ENCODE measurements at regions of chr12 and their contacts with region 1.

Region 1: DNA sequence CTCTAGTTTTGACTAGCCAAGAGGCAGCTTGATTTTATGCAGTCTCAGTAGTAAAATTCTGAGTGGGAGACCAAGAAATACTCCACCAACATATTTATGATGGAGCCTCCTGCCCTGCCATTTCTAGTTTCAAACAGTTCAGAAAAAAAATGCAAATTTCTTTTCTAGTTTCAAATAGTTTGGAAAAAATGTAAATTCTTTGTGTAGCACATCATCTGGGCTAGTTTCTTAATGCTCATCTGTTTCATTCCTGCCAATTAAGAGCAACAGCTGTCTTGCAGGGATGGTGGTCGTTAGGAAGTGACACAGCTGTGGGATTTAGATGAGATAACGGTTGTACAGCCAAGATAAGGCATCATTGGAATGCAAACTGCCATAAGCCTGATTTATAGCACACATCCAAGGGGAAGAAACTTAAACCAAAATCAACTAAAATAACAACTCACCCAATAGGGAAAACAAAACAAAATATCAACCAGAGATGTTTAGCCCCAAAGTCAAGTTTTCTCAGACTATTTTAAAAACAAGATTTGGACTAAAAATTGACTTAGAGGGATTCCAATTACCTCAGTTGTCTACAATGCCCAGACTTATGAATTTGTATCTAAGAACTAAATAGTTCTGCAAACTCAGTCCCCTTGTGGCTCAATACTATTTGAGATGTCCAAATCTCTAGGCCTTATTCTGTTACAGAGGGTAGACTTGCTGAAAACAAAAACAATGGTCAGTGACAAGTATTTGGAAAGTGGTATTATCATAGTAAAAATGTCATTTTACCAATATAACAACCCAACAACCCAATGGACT is 291.3 kb upstream of the ATP2B1 start:
- DNase-seq: no peak
- ATAC-seq: no peak
- H3K4me3 ChIP-seq: no peak overlapping the region
- H3K27ac ChIP-seq: no peak overlapping the region
- H3K4me1 ChIP-seq: no peaks in the 10 kb centered on the region
- H3K27me3 ChIP-seq: no peaks in the 10 kb centered on the region
- CTCF ChIP-seq: no peak

Region 2: DNA sequence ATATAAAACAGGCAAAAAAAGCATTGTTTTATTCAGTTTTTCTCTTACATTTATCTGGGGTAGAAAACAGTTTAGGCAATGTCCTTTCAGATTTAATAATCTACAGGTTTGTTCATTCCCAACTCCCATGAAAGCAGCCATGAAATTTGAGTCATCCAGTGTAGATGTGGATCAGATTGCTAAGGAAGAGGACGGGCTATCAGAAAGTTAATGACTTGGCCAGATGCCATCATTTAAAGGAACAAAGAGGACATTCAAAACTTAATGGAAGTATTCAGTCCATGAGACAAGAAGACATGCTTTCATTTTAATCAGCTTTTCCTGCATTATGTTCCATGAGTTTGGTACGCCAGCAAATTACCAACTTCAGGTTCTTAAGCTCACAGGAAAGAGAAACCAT is 442.9 kb before region 1 on chr12:
- CTCF ChIA-PET with region 1: no interaction called
- POLR2A ChIA-PET with region 1: no interaction called
- in situ Hi-C with region 1: no loop called
- intact Hi-C with region 1: no loop called
- DNase-seq: no peak
- ATAC-seq: no peak
- H3K4me3 ChIP-seq: no peak overlapping the region
- H3K27ac ChIP-seq: no peak overlapping the region
- H3K4me1 ChIP-seq: no peaks in the 10 kb centered on the region
- H3K27me3 ChIP-seq: no peaks in the 10 kb centered on the region
- CTCF ChIP-seq: no peak

Region 3: DNA sequence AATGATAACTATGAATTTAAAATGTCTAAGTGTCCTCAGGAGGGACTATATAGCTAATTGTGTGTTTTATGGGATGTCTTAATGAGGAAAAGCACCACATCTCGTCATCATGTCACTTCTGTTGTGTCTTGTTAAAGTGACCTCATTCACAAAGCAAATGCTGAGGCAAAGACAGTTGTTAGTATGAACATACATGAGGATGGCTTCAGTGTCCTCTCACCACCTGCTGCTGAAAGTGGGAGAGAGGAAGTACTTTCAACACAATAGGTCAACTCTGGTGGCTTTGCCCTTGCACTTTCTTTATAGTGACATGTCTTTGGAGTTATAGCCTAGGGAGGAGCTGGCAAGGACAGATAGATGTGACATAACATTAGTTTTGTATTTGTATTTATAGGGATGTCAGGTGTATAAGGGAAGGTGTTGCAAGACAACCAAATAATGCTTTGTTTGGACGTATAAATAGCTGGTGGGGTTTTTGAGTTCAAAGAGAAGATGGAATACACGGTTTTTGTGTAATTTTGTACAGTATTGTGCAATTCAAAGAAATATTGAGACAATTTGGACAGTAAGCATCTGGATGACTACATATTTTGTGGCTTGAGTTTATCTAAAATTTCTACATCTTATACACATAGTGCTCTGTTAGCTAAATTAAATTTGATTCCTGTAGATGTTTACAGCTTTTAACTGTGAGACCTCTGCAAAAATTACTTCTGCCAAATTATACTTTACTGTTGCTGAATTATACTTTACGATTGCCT is 159.6 kb before region 1 on chr12:
- CTCF ChIA-PET with region 1: no interaction called
- POLR2A ChIA-PET with region 1: no interaction called
- in situ Hi-C with region 1: no loop called
- intact Hi-C with region 1: no loop called
- DNase-seq: no peak
- ATAC-seq: no peak
- H3K4me3 ChIP-seq: no peak overlapping the region
- H3K27ac ChIP-seq: no peak overlapping the region
- H3K4me1 ChIP-seq: no peaks in the 10 kb centered on the region
- H3K27me3 ChIP-seq: no peaks in the 10 kb centered on the region
- CTCF ChIP-seq: no peak

Region 4: GRCh38 chr12:89949457-89950195 is 50.3 kb before region 1 on chr12:
- CTCF ChIA-PET with region 1: no interaction called
- POLR2A ChIA-PET with region 1: no interaction called
- in situ Hi-C with region 1: no loop called
- intact Hi-C with region 1: no loop called
- DNase-seq: peak; percentile 39
- ATAC-seq: peak; percentile 81
- H3K4me3 ChIP-seq: no peak overlapping the region
- H3K27ac ChIP-seq: peak overlapping the region; percentile 82
- H3K4me1 ChIP-seq: peaks cover 28% of the 10 kb centered on the region
- H3K27me3 ChIP-seq: no peaks in the 10 kb centered on the region
- CTCF ChIP-seq: peak; percentile 10; the same call in 1 of the 2 replicates

Region 5: DNA sequence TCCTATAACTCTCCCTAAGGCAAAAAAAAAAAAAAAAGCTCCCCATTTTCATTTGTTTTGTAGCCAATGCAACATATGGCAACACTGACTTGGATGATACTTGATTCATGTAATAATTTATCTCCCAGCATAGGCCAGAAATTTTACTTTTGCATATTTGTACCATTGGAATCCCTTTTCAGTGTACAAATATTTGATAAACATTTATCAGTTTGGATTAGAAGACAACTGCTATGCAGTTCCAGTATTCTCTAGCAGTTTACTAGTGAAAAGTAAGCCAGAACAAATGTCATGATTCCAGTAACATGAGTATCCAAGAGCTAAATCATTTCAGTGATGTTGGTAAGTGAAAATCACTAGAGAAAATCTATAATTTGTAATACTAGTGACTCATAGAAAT is 562.8 kb after region 1 on chr12:
- CTCF ChIA-PET with region 1: no interaction called
- POLR2A ChIA-PET with region 1: interaction called, 16 read pairs
- in situ Hi-C with region 1: no loop called
- intact Hi-C with region 1: no loop called
- DNase-seq: no peak
- ATAC-seq: no peak
- H3K4me3 ChIP-seq: no peak overlapping the region
- H3K27ac ChIP-seq: no peak overlapping the region
- H3K4me1 ChIP-seq: no peaks in the 10 kb centered on the region
- H3K27me3 ChIP-seq: no peaks in the 10 kb centered on the region
- CTCF ChIP-seq: no peak